RWPE1 (cell line): ENCODE measurements at regions of chr12 and their contacts with region 1.

Region 1: DNA sequence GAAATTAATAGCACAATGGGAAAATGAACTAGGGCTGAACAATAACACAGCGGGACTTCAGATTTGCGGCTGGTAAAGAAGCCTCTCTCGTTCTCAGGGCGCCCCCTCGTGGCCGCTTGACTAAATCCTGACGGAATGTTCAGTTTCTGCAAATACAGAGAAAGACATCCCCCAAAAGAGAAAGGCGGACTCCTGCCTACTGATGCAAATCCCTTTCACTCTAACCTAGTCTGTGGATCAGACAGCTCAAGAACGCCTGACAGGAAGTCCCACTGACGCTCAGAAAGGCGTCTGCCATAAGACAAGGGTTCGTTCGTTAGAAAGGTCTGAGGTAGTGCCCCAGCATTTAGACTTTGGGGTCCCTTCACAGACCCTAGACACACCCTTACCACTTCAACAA is 2.5 kb downstream of the NUAK1 start:
- DNase-seq: peak; percentile 57
- H3K27ac ChIP-seq: peak overlapping the region; percentile 67
- CTCF ChIP-seq: peak; percentile 81

Region 2: GRCh38 chr12:105420659-105421240 is 715.5 kb before region 1 on chr12:
- CTCF ChIA-PET with region 1: interaction called, 23 read pairs
- POLR2A ChIA-PET with region 1: no interaction called
- DNase-seq: peak; percentile 60
- H3K27ac ChIP-seq: no peak overlapping the region
- CTCF ChIP-seq: peak; percentile 86

Region 3: DNA sequence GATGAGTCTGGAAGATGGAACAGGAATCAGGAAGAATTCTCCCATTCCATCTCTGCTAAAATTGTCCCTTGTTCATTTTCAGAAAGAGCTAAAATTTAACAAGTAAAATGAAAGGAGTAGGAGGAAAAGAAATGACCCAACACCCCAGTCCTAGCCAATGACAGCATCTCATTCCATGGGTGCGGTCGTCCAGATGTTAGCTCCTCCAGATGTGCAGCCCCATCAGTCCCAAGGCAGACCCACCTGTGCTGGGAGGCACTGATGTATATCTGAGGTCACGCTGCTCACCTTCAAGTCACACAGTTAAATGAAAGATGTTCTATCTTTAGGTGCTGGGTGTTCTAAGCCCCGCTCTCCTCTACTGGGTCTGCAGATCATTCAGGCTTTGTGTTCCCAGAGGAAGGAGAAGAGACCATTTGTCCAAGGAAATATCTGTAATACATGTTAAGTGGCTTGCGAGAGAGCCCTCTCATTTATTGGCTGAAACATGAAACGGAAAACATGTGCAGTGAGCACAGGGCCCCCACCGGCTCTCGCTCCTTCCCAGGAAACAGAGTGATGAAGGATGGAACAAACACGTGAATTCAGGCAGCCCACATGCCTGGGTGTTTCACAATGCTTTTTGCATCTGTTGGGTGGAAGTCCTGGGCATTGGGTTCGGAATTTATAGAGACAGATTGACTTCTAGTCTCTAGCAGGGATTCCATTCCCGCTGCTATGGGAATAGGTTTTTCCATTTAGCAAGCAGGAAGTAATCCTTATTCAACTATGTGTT is 292.1 kb before region 1 on chr12:
- CTCF ChIA-PET with region 1: no interaction called
- POLR2A ChIA-PET with region 1: no interaction called
- DNase-seq: no peak
- H3K27ac ChIP-seq: no peak overlapping the region
- CTCF ChIP-seq: no peak

Region 4: GRCh38 chr12:106113042-106113441 is 23.2 kb before region 1 on chr12:
- CTCF ChIA-PET with region 1: interaction called, 12 read pairs
- POLR2A ChIA-PET with region 1: no interaction called
- DNase-seq: no peak
- H3K27ac ChIP-seq: peak overlapping the region; percentile 97
- CTCF ChIP-seq: no peak